ENCODE measurements at regions of chr1 and their contacts with region 1.

Region 1: GRCh38 chr1:112390775-112391602 is 5.0 kb upstream of the CTTNBP2NL start:
- DNase-seq: peak; percentile 92 to 94
- H3K4me3 ChIP-seq: peak overlapping the region; percentile 25
- H3K4me1 ChIP-seq: peaks cover 18% of the 10 kb centered on the region
- H3K27me3 ChIP-seq: no peaks in the 10 kb centered on the region

Region 2: GRCh38 chr1:112464501-112464900 is 73.5 kb after region 1 on chr1:
- in situ Hi-C with region 1: loop called (anchors 5 kb)
- DNase-seq: no peak
- H3K4me3 ChIP-seq: no peak overlapping the region
- H3K4me1 ChIP-seq: peaks cover 7% of the 10 kb centered on the region
- H3K27me3 ChIP-seq: no peaks in the 10 kb centered on the region

Region 3: GRCh38 chr1:112619520-112620376 is 228.8 kb after region 1 on chr1 and contains the start of gene CAPZA1:
- in situ Hi-C with region 1: loop called (anchors 5 kb)
- DNase-seq: peak; percentile 79 to 90
- H3K4me3 ChIP-seq: peak within 1 kb of the TSS; percentile 76
- H3K4me1 ChIP-seq: peaks cover 28% of the 10 kb centered on the region
- H3K27me3 ChIP-seq: no peaks in the 10 kb centered on the region

Region 4: DNA sequence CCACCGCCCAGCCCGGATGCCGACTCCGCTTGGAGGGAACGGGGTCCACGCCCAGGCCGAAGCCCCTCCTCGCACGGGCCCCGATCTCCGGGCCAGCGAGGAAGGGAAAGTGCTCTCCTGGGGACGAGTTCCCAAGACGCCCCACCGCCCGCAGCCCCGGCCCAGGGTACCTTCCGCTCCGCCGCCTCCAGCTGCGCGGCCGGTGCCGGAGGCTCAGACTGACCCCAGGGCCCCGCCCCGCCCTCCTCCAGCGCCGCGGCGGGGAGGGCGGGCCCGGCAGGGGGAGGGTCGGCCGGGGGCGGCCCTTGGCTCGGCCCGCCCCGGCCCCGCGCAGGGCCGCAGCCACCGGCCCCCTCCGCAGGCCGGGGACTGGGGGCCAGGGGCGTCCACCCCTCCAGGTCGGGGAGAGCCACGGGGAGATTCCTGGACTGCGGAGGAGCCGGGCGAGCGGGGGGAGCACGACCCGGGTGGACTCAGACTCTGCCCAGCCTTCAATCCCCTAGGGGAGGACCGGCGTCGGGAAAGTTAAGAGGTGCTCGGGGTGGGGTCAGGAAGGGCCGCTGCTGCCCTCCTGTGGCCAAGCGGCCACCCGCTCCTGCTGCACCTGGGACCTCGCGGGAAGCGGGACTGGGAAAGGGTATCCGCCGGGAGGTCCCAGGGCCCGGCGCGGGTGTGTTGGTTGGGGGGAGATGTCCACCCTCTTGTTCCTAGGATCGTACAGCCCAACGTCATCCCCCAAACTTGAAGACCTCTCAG is 316.1 kb after region 1 on chr1 and contains the start of gene RHOC:
- in situ Hi-C with region 1: loop called (anchors 5 kb)
- DNase-seq: peak; percentile 88 to 95
- H3K4me3 ChIP-seq: peak within 1 kb of the TSS; percentile 88
- H3K4me1 ChIP-seq: peaks cover 19% of the 10 kb centered on the region
- H3K27me3 ChIP-seq: no peaks in the 10 kb centered on the region

Region 5: DNA sequence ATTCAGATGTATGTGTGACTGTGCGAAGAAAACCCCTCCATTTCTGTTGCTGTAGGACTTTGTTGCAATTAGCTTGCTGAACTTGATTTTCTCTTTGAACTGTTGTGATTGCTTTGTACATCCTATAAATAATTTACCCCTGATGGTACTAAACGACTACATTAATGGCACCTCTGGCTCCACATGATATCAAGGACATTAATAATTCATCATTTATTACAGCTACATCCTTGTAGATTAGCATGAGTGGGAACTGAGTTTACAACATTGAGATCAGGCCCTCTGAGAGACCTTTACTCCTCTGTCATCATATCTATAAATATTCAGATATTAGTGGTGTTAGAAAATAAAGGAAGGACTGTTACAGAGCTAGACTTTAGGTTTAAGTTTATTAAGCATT is 695.6 kb after region 1 on chr1:
- in situ Hi-C with region 1: no loop called
- DNase-seq: no peak
- H3K4me3 ChIP-seq: no peak overlapping the region
- H3K4me1 ChIP-seq: no peaks in the 10 kb centered on the region
- H3K27me3 ChIP-seq: no peaks in the 10 kb centered on the region

Measured in HAP-1 (cell line).